Mammary epithelial cell (primary cell): ENCODE measurements at regions of chr2 and their contacts with region 1.

Region 1: GRCh38 chr2:152183401-152184073 is 8.0 kb upstream of the STAM2 start:
- DNase-seq: no peak
- H3K4me3 ChIP-seq: no peak overlapping the region
- H3K27ac ChIP-seq: no peak overlapping the region
- H3K4me1 ChIP-seq: no peaks in the 10 kb centered on the region
- H3K27me3 ChIP-seq: no peaks in the 10 kb centered on the region
- CTCF ChIP-seq: no peak

Region 2: GRCh38 chr2:152054593-152054992 is 128.9 kb before region 1 on chr2:
- CTCF ChIA-PET with region 1: no interaction called
- dilution Hi-C with region 1: no loop called
- in situ Hi-C with region 1: no loop called
- intact Hi-C with region 1: no loop called
- DNase-seq: peak; percentile 66
- H3K4me3 ChIP-seq: no peak overlapping the region
- H3K27ac ChIP-seq: no peak overlapping the region
- H3K4me1 ChIP-seq: peaks cover 8% of the 10 kb centered on the region
- H3K27me3 ChIP-seq: peaks cover 27% of the 10 kb centered on the region
- CTCF ChIP-seq: peak in 1 of 2 donors; percentile 15

Region 3: DNA sequence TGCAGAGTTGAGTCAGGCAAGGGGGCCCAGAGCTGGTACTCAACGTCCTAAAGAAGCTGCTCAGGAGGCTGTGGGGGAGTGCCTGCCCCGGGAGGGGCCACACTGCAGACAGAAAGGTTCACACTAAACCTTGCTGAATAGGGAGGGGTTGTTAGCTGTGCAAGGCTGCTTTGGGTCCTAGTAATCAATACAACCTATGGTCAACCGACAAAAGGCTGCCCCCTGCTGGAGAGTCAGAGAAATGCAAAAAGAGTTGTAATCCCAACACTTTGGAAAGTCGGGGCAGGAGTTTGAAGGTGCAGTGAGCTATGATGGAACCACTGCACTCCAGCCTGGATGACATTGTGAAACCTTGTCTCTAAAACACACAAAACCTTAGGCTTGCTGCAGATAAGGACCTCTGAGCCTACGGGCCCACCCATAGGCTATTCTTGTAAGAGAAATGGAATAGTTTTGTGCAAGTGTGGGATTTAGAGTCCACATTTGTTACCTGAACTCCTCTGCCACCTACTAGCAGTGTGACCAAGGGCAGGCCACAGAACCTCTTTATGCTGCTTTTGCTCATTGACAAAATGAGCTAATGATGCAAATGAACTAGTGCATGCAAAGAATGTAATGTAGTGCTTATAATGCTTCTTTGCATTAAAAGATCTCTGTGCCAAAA is 452.2 kb after region 1 on chr2:
- CTCF ChIA-PET with region 1: no interaction called
- dilution Hi-C with region 1: no loop called
- in situ Hi-C with region 1: loop called in 1 of 2 experiments (anchors 5 kb)
- intact Hi-C with region 1: no loop called
- DNase-seq: peak; percentile 42
- H3K4me3 ChIP-seq: no peak overlapping the region
- H3K27ac ChIP-seq: no peak overlapping the region
- H3K4me1 ChIP-seq: no peaks in the 10 kb centered on the region
- H3K27me3 ChIP-seq: no peaks in the 10 kb centered on the region
- CTCF ChIP-seq: peak; percentile 70 to 78